GM12878 (cell line): ENCODE measurements at regions of chr4 and their contacts with region 1.

Region 1: GRCh38 chr4:2761035-2761923 is 5.1 kb upstream of the TNIP2 start:
- DNase-seq: no peak
- ATAC-seq: peak; percentile 18
- H3K4me3 ChIP-seq: no peak overlapping the region
- H3K27ac ChIP-seq: no peak overlapping the region
- H3K4me1 ChIP-seq: peaks cover 14% of the 10 kb centered on the region
- H3K27me3 ChIP-seq: no peaks in the 10 kb centered on the region
- CTCF ChIP-seq: no peak
- EP300 ChIP-seq: no peak
- POLR2A ChIP-seq: no peak
- RAD21 ChIP-seq: no peak

Region 2: GRCh38 chr4:2787230-2788088 is 26.2 kb after region 1 on chr4:
- CTCF ChIA-PET with region 1: interaction called, 9 read pairs
- POLR2A ChIA-PET with region 1: interaction called, 5 read pairs
- RAD21 ChIA-PET with region 1: interaction called, 15 read pairs
- SMC1A ChIA-PET with region 1: interaction called, 5 read pairs
- in situ Hi-C with region 1: no loop called
- intact Hi-C with region 1: no loop called
- DNase-seq: peak; percentile 88
- ATAC-seq: peak; percentile 79
- H3K4me3 ChIP-seq: no peak overlapping the region
- H3K27ac ChIP-seq: peak overlapping the region; percentile 79
- H3K4me1 ChIP-seq: peaks cover 43% of the 10 kb centered on the region
- H3K27me3 ChIP-seq: no peaks in the 10 kb centered on the region
- CTCF ChIP-seq: peak in 2 of 3 experiments; percentile 16 to 26; a peak in 2 of 6 replicates
- EP300 ChIP-seq: peak; percentile 88 to 89; a peak in 2 of 4 replicates
- POLR2A ChIP-seq: peak; percentile 43; the same call in 1 of the 2 replicates
- RAD21 ChIP-seq: no peak

Region 3: DNA sequence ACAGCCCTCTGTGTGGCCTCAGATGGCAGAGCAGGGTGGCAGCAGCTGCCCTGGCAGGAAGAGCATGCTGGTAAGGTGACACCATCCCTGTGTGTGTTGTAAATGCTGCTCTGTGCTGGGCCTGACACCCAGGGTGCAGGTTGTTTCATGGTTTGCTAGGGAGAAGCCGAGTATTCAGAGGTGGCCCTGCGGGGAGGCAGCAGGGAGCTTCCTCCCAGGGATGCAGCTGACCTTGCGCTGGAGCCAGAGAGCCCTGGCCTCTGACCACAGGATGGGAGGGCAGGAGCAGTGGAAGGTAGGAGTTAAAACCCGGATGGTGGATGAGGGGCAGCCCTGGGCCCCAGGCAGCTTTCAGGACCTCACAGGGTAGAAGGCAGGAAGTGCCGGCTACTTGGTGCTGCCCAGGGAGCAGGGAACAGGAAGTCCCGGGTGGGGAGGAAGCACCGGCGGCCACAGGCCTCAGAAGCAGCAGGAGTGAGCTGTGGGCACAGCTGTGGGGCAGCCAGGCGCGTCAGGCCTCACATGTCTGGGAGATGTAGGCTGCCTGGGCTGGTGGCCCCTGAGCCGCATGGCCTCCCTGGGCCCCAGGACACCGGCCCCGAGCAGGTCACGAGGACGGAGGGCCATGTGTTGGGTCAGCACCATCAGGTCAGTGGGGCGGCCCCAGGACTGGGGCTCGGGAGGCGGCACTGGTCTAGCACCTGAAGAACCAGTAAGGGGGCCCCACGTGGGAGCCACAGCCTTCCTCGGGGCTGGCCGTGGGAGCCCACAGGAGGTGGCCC is 50.7 kb after region 1 on chr4:
- CTCF ChIA-PET with region 1: interaction called, 3 read pairs
- POLR2A ChIA-PET with region 1: interaction called, 3 read pairs
- RAD21 ChIA-PET with region 1: interaction called, 5 read pairs
- SMC1A ChIA-PET with region 1: no interaction called
- in situ Hi-C with region 1: no loop called
- intact Hi-C with region 1: loop called (anchors 5 kb)
- DNase-seq: peak; percentile 40
- ATAC-seq: peak; percentile 82
- H3K4me3 ChIP-seq: peak overlapping the region; percentile 97
- H3K27ac ChIP-seq: peak overlapping the region; percentile 90
- H3K4me1 ChIP-seq: peaks cover 41% of the 10 kb centered on the region
- H3K27me3 ChIP-seq: no peaks in the 10 kb centered on the region
- CTCF ChIP-seq: no peak
- EP300 ChIP-seq: 0 out of 4 replicates have a peak, but pooled peaks of 1 of the 2 experiments have one; percentile 17
- POLR2A ChIP-seq: peak; percentile 88
- RAD21 ChIP-seq: no peak

Region 4: DNA sequence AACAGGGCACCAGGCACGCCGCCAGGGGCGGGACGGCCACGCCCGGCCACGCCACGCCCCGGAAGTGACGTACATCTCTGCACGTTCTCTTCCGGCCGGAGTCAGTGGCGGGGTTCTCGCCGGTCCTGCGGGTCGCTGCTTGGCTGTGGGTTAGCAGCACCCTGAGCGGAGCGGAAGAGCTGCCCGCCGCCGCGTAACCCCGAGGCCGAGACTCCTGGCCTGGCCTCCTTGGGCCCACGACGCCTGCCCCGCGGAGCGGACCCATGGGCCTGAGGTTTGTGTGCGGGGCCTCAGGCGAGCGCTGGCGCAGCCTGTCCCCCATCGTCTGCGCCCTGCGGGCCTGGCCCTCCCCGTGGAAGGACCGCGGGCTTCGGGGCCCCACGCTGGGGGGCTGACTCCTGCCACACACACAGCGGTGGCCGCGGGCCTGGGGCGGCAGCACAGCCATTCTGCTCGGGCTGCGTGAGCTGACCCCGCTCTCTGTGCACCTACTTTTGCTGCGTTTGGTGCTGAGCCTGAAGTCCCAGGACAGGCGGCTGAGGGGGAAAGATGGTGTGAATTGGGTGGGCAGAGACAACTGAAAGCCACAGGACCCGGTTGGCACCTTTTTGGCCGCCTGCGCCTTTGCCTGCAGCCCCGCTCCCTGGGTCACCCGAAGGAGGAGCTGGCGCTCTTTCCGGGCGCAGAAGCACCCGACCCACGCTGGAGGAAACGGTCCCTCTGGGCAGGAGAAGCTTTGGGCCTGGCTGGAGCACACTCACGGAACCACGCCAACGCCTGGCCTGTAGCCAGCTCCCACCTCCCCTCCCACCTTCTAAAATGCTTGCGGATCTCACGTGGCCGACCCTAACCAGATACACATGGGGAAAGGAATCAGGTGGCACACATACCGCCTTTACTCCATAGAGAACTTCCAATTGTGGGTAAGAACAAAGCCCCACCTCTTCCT is 173.8 kb after region 1 on chr4:
- CTCF ChIA-PET with region 1: interaction called, 5 read pairs
- POLR2A ChIA-PET with region 1: interaction called, 3 read pairs
- RAD21 ChIA-PET with region 1: interaction called, 21 read pairs
- SMC1A ChIA-PET with region 1: interaction called, 3 read pairs
- in situ Hi-C with region 1: loop called (anchors 25 kb)
- intact Hi-C with region 1: loop called (anchors 5 kb)
- DNase-seq: peak; percentile 80
- ATAC-seq: peak; percentile 48
- H3K4me3 ChIP-seq: peak overlapping the region; percentile 97
- H3K27ac ChIP-seq: peak overlapping the region; percentile 74
- H3K4me1 ChIP-seq: peaks cover 42% of the 10 kb centered on the region
- H3K27me3 ChIP-seq: no peaks in the 10 kb centered on the region
- CTCF ChIP-seq: 0 out of 6 replicates have a peak, but pooled peaks of 1 of the 3 experiments have one; percentile 12
- EP300 ChIP-seq: no peak
- POLR2A ChIP-seq: no peak
- RAD21 ChIP-seq: no peak

Region 5: DNA sequence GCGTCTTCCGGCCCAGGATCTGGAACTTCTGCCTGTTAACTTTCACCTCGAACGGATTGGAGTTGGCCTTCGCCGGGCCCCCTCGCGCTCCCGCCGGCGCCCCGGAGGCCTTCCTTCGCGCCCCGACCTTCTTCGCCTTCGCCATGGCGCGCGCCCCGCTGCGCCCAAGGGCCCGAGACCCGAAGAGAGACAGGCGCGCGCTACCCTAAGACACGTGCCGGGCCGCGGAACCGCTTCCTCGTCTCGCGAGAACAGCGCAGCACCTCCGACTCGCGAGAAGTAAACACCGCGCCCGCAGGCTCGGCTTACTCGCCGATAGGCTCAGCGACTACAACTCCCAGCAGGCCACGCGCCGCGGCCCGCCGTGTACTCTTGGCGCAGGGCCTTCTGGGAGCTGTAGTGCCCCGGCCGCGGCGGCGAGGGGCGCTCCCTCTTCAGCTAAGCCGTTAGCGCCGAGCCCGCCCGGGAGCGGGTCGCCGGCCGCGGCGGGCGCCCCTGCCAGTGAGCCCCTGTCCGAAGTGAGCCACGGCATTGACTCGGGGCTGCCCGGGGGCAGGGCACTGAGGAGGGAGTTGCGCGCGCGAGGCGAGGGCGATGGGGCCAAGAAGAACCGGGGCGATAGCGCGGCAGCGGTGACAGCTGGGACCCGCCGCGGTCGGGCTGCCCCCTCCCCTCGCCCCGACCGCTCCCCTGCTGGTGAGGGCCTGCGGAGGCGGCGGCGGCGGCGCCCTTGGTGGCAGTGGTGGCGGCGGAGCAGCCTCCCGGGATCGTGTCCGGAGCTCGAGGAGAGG is 202.1 kb after region 1 on chr4 and contains the starts of genes GRK4 and NOP14:
- CTCF ChIA-PET with region 1: no interaction called
- POLR2A ChIA-PET with region 1: interaction called, 8 read pairs
- RAD21 ChIA-PET with region 1: interaction called, 3 read pairs
- SMC1A ChIA-PET with region 1: interaction called, 4 read pairs
- in situ Hi-C with region 1: no loop called
- intact Hi-C with region 1: loop called (anchors 5 kb)
- DNase-seq: peak; percentile 92
- ATAC-seq: peak; percentile 92
- H3K4me3 ChIP-seq: peak within 1 kb of the TSS; percentile 78
- H3K27ac ChIP-seq: peak within 1 kb of the TSS; percentile 91
- H3K4me1 ChIP-seq: peaks cover 15% of the 10 kb centered on the region
- H3K27me3 ChIP-seq: no peaks in the 10 kb centered on the region
- CTCF ChIP-seq: peak in 2 of 3 experiments; percentile 9 to 23; a peak in 3 of 6 replicates
- EP300 ChIP-seq: 0 out of 4 replicates have a peak, but pooled peaks of 1 of the 2 experiments have one; percentile 22
- POLR2A ChIP-seq: peak; percentile 90
- RAD21 ChIP-seq: no peak
- polyA plus RNA-seq, gene GRK4: 1.1 to 1.6 TPM
- polyA plus RNA-seq, gene NOP14: 13.8 to 24.7 TPM